Colonic mucosa (tissue), 4 donors: ENCODE measurements at regions of chr20 and their contacts with region 1.

Region 1: GRCh38 chr20:44310664-44311639 is at the start of gene FITM2:
- DNase-seq: peak; percentile 99
- H3K4me3 ChIP-seq: peak within 1 kb of the TSS; percentile 97
- H3K27ac ChIP-seq: peak within 1 kb of the TSS; percentile 56
- H3K4me1 ChIP-seq: peaks cover 4% of the 10 kb centered on the region
- H3K27me3 ChIP-seq: no peaks in the 10 kb centered on the region
- CTCF ChIP-seq: peak; percentile 84
- total RNA-seq, gene FITM2: 10.1 to 11.6 TPM

Region 2: DNA sequence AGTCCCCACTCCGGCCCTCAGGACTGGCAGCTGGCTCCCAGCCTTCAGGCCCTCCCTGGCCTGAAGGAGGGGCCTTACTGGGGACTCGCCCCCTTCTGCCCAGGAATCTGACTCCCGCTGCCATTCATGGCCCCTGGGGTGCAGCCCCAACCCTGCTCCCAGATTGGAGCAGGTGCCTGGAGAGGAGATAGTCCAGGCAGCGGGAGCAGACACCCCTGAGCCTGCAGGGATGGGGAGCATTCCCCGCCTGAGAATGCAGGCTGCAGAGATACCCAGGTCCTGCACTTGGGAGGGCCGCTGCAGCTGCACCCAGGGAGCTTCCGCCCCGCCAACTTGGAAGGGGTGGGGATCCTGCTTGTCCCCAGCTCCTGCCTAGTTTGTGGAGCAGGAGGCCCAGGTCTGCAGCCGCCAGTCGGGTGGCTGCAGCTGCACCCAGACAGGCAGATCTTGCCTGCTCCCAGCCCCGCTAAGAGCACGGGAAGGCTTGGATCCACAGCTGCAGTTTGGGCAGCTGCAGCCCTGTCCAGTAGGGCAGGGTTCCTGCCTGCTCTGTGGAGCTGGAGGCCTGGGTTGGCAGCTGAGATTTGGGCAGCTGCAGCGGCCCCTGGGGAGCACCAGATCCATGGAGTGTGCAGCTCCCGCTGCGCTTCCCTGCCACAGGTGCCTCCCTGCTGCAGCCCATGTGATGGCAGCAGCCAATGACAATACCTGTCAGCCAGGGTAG is 589.4 kb before region 1 on chr20:
- intact Hi-C with region 1: no loop called
- DNase-seq: no peak
- H3K4me3 ChIP-seq: no peak overlapping the region
- H3K27ac ChIP-seq: no peak overlapping the region
- H3K4me1 ChIP-seq: no peaks in the 10 kb centered on the region
- H3K27me3 ChIP-seq: no peaks in the 10 kb centered on the region
- CTCF ChIP-seq: no peak

Region 3: DNA sequence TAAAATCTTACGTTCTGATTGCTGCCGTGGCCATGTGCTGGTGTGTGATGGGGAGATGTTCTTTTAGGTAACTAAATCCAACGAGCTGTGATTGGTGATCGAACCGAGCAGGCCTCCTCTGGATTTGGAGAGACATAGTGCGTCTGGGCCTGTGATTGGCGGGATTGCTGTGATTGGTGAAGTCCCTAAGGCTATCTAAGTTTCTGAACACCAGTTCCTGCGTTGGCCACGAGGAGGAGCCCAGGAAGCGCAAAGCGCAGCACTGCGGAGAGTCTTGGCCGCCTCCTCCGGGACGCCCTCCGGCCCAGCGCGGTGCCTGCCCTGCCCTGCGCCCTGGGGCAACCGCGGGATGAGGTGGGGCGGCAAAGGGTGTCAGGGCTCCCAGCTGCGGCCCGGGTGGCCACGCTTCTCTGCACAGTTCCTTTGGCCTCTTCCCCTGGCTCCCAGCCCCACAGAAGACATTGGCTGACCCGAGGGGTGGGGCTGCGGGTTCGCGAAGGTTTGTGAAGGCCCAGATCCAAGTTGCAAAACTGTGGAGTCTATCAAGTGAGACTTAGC is 77.6 kb after region 1 on chr20:
- intact Hi-C with region 1: loop called (anchors 10 kb)
- DNase-seq: peak; percentile 90
- H3K4me3 ChIP-seq: no peak overlapping the region
- H3K27ac ChIP-seq: no peak overlapping the region
- H3K4me1 ChIP-seq: peaks cover 8% of the 10 kb centered on the region
- H3K27me3 ChIP-seq: no peaks in the 10 kb centered on the region
- CTCF ChIP-seq: peak; percentile 71